ENCODE measurements at regions of chr3 and their contacts with region 1.

Region 1: DNA sequence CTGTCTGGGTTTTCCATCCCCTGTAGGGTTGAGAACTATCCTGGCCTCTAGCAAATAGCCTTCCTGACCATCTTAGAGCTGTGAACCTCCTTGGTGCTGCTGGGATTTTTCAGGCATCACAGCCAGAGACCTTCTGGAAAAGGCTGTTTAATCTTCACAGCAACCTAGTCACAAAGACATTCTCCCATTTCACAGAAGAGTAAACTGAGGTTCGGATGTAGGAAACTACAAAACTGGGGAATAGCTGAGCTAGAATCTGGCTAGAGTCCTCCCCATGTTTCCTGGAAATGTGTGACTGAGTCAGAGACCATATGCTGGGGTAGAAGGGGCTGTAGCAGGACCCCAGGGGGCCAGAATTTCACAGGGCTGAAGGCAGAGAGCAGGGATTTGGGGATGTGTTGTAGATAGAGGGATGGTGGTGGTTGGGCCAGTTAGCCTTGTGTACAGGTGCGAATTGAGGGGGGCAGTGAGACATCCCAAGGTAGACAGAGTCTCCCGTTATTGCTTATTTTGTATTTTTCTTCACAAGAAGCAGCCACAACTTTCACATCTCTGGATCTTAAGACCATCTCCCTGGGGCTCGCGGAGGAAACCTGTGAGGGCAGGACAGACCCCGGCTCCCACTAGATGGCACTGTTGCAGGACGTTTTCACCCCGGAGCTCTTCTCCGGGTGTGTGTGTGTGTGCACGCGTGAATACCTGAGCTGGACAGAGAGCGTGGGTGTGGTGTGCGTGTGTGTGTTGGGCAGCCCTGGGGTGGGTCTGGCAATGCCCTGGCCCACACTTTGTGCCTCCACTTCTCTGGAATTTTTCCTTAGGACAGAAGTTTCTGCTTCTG is 66.9 kb upstream of the PRR23C start:
- DNase-seq: peak; percentile 90
- H3K4me3 ChIP-seq: no peak overlapping the region
- H3K27ac ChIP-seq: no peak overlapping the region
- H3K4me1 ChIP-seq: no peaks in the 10 kb centered on the region
- H3K27me3 ChIP-seq: peaks cover 0 to 12% (median 0%) of the 10 kb centered on the region in 4 donors
- CTCF ChIP-seq: peak; percentile 53 to 74 (median 66)
- EP300 ChIP-seq: no peak
- POLR2A ChIP-seq: no peak

Region 2: GRCh38 chr3:139329345-139329850 is 217.8 kb after region 1 on chr3:
- intact Hi-C with region 1: loop called (anchors 2 kb)
- DNase-seq: no peak
- H3K4me3 ChIP-seq: peak overlapping the region in 3 of 4 donors; percentile 10 to 25 (median 24)
- H3K27ac ChIP-seq: no peak overlapping the region
- H3K4me1 ChIP-seq: peaks cover 0 to 8% (median 7%) of the 10 kb centered on the region in 4 donors
- H3K27me3 ChIP-seq: peaks cover 0 to 38% (median 0%) of the 10 kb centered on the region in 4 donors
- CTCF ChIP-seq: peak; percentile 90 to 98 (median 98)
- EP300 ChIP-seq: no peak
- POLR2A ChIP-seq: no peak

Region 3: GRCh38 chr3:139559541-139559940 is 447.9 kb after region 1 on chr3:
- intact Hi-C with region 1: no loop called
- DNase-seq: peak; percentile 79
- H3K4me3 ChIP-seq: no peak overlapping the region
- H3K27ac ChIP-seq: no peak overlapping the region
- H3K4me1 ChIP-seq: peaks cover 0 to 6% (median 0%) of the 10 kb centered on the region in 4 donors
- H3K27me3 ChIP-seq: no peaks in the 10 kb centered on the region
- CTCF ChIP-seq: no peak
- EP300 ChIP-seq: no peak
- POLR2A ChIP-seq: no peak